ENCODE measurements at regions of chr16 and their contacts with region 1.

Region 1: DNA sequence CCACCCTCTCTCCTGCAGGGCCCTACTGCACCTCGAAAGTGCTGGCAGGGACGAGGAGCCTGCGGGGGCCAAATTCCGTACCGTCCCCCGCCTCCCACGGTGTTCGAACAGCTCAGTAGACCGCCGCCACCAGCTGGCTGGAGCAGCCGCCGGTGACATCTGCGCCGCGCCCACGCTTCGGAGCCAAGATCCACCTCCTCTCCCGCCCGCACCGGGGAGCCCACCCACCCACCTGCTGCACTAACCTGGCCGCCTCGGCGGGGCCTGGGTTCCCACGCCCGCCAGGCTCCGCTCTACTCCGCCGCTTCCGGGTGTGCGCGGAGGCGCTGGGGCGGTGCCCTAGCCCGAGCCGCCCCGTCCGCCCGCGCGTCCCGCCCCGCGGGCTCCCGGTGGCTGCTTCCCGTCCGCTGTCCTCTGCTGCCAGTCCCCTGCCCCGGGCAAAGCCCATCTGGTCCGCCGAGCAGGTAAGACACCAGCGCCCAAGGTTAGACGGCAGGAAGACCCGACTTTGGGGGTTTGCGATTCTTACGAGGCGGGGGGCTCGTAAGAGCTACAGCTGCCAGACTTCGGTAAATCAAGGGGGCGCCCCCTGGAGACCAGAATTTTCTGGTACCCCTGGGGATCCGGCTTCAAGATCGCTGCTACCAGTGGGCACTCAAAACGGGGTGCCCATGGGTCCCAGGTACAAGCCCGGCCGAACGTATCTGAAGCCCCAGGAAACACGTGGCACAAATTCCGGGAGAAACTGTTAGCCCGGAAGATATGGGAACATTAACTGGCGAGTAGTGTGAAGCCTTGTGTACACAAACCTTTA is at the starts of genes FBXL8 and TRADD:
- DNase-seq: peak; percentile 89
- H3K4me3 ChIP-seq: peak within 1 kb of the TSS; percentile 93 to 96
- H3K27ac ChIP-seq: peak within 1 kb of the TSS; percentile 56 to 60
- H3K4me1 ChIP-seq: peaks cover 4 to 30% of the 10 kb centered on the region in 2 experiments; a peak in 1 of 4 replicates
- H3K27me3 ChIP-seq: no peaks in the 10 kb centered on the region
- CTCF ChIP-seq: peak; percentile 74
- EP300 ChIP-seq: no peak; a peak in 1 of 4 replicates
- RAD21 ChIP-seq: no peak
- polyA plus RNA-seq, gene FBXL8: 17.8 and 21.8 TPM in 2 replicates
- polyA plus RNA-seq, gene TRADD: 27.7 and 28.5 TPM in 2 replicates

Region 2: GRCh38 chr16:66858740-66859396 is 300.9 kb before region 1 on chr16:
- CTCF ChIA-PET with region 1: no interaction called
- POLR2A ChIA-PET with region 1: no interaction called
- DNase-seq: peak; percentile 19
- H3K4me3 ChIP-seq: no peak overlapping the region
- H3K27ac ChIP-seq: no peak overlapping the region; a peak in 1 of 4 replicates
- H3K4me1 ChIP-seq: peaks cover 7 to 12% of the 10 kb centered on the region in 2 experiments; a peak in 2 of 4 replicates
- H3K27me3 ChIP-seq: no peaks in the 10 kb centered on the region
- CTCF ChIP-seq: no peak
- EP300 ChIP-seq: no peak
- RAD21 ChIP-seq: no peak

Region 3: GRCh38 chr16:66954097-66954659 is 205.6 kb before region 1 on chr16:
- CTCF ChIA-PET with region 1: interaction called, 82 read pairs
- POLR2A ChIA-PET with region 1: no interaction called
- DNase-seq: peak; percentile 83
- H3K4me3 ChIP-seq: peak overlapping the region in 1 of 2 experiments; percentile 23; a peak in 1 of 4 replicates
- H3K27ac ChIP-seq: no peak overlapping the region
- H3K4me1 ChIP-seq: no peaks in the 10 kb centered on the region
- H3K27me3 ChIP-seq: no peaks in the 10 kb centered on the region
- CTCF ChIP-seq: peak; percentile 87
- EP300 ChIP-seq: no peak
- RAD21 ChIP-seq: peak; percentile 91

Region 4: GRCh38 chr16:66977341-66978113 is 182.3 kb before region 1 on chr16:
- CTCF ChIA-PET with region 1: interaction called, 103 read pairs
- POLR2A ChIA-PET with region 1: no interaction called
- DNase-seq: peak; percentile 94
- H3K4me3 ChIP-seq: peak overlapping the region in 1 of 2 experiments; percentile 46; a peak in 1 of 4 replicates
- H3K27ac ChIP-seq: no peak overlapping the region
- H3K4me1 ChIP-seq: no peaks in the 10 kb centered on the region; a peak in 1 of 4 replicates
- H3K27me3 ChIP-seq: no peaks in the 10 kb centered on the region
- CTCF ChIP-seq: peak; percentile 93
- EP300 ChIP-seq: no peak
- RAD21 ChIP-seq: peak; percentile 99

Region 5: GRCh38 chr16:67017810-67018488 is 141.9 kb before region 1 on chr16:
- CTCF ChIA-PET with region 1: interaction called, 470 read pairs
- POLR2A ChIA-PET with region 1: interaction called, 5 read pairs
- DNase-seq: peak; percentile 89
- H3K4me3 ChIP-seq: no peak overlapping the region
- H3K27ac ChIP-seq: peak overlapping the region in 1 of 2 experiments; percentile 11; a peak in 1 of 4 replicates
- H3K4me1 ChIP-seq: peaks cover 11 to 14% of the 10 kb centered on the region in 2 experiments; a peak in 2 of 4 replicates
- H3K27me3 ChIP-seq: no peaks in the 10 kb centered on the region
- CTCF ChIP-seq: peak; percentile 89
- EP300 ChIP-seq: no peak
- RAD21 ChIP-seq: peak; percentile 98

Region 6: DNA sequence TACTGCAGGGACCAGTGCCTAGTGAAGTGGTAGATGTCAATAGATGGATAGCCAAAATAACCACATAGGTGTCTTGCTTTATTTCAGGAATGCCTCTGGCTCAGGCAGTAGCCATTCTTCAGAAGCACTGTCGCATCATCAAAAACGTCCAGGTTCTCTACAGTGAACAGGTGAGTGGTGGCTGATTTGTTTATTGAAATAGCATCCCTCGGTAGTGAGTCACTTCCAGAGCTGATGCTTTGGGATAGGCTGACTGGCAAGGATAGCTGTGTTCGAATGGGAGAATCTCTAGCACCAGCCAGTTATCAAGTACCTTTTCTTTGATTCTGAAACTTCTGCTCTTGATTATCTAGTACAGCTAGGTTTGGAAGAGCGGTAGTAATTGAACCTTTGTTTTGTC is 39.8 kb before region 1 on chr16:
- CTCF ChIA-PET with region 1: interaction called, 10 read pairs
- POLR2A ChIA-PET with region 1: no interaction called
- DNase-seq: no peak
- H3K4me3 ChIP-seq: no peak overlapping the region
- H3K27ac ChIP-seq: no peak overlapping the region
- H3K4me1 ChIP-seq: peaks cover 0 to 4% of the 10 kb centered on the region in 2 experiments; a peak in 1 of 4 replicates
- H3K27me3 ChIP-seq: no peaks in the 10 kb centered on the region
- CTCF ChIP-seq: no peak
- EP300 ChIP-seq: no peak
- RAD21 ChIP-seq: no peak

Region 7: GRCh38 chr16:67173808-67174705 is 14.3 kb after region 1 on chr16:
- CTCF ChIA-PET with region 1: interaction called, 32 read pairs
- POLR2A ChIA-PET with region 1: interaction called, 37 read pairs
- DNase-seq: peak; percentile 90
- H3K4me3 ChIP-seq: peak overlapping the region; percentile 45 to 60
- H3K27ac ChIP-seq: peak overlapping the region; percentile 67 to 86
- H3K4me1 ChIP-seq: peaks cover 39 to 60% of the 10 kb centered on the region in 2 experiments; a peak in 3 of 4 replicates
- H3K27me3 ChIP-seq: no peaks in the 10 kb centered on the region
- CTCF ChIP-seq: no peak; the same call in 1 of the 2 replicates
- EP300 ChIP-seq: no peak
- RAD21 ChIP-seq: peak; percentile 16; the same call in 1 of the 2 replicates

Region 8: DNA sequence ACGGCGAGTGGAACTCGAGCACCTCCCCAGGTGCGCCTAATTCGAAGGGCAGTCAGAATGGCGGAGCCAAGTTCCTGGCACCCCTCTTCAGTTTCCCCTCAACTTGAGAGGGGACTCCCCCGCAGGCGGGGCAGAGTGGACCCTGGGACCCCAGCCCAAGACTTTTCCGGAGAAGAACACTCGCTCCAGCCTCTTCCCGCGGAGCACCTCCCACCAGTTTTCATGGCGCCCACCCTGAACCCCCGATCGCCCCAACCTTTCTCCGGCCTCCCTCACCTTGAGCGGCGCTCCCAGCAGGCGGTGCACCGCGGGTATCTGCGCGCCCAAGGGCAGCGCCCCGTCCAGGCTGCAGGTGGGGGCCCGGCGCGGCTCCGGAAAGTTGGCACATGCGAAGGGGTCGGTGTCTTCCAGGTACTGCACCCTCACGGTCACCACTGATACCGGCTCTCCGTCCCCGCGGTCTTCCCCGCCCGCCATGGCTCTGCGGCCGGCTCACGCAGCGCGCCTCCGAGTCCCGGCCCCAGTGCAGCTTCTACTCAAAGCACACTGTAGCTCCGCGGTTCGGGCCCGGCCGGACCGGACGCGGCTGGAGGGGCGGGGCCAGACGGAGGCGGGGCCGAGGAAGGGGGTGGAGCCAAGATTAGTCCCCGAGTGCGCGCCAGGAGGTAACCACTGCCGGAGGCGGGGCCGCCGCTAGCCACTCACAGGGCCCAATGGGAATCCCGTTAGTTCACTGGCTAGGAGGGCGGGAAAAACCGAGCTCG is 87.3 kb after region 1 on chr16 and contains the start of gene FHOD1:
- CTCF ChIA-PET with region 1: interaction called, 12 read pairs
- POLR2A ChIA-PET with region 1: no interaction called
- DNase-seq: peak; percentile 93
- H3K4me3 ChIP-seq: peak within 1 kb of the TSS; percentile 92 to 95
- H3K27ac ChIP-seq: peak within 1 kb of the TSS; percentile 96
- H3K4me1 ChIP-seq: peaks cover 42 to 46% of the 10 kb centered on the region in 2 experiments
- H3K27me3 ChIP-seq: no peaks in the 10 kb centered on the region
- CTCF ChIP-seq: no peak
- EP300 ChIP-seq: no peak
- RAD21 ChIP-seq: no peak
- polyA plus RNA-seq, gene FHOD1: 53.2 and 70.9 TPM in 2 replicates

Region 9: GRCh38 chr16:67270931-67271338 is 111.1 kb after region 1 on chr16:
- CTCF ChIA-PET with region 1: no interaction called
- POLR2A ChIA-PET with region 1: no interaction called
- DNase-seq: no peak
- H3K4me3 ChIP-seq: no peak overlapping the region
- H3K27ac ChIP-seq: no peak overlapping the region
- H3K4me1 ChIP-seq: peaks cover 0 to 7% of the 10 kb centered on the region in 2 experiments; a peak in 1 of 4 replicates
- H3K27me3 ChIP-seq: no peaks in the 10 kb centered on the region
- CTCF ChIP-seq: no peak
- EP300 ChIP-seq: no peak
- RAD21 ChIP-seq: no peak

Region 10: DNA sequence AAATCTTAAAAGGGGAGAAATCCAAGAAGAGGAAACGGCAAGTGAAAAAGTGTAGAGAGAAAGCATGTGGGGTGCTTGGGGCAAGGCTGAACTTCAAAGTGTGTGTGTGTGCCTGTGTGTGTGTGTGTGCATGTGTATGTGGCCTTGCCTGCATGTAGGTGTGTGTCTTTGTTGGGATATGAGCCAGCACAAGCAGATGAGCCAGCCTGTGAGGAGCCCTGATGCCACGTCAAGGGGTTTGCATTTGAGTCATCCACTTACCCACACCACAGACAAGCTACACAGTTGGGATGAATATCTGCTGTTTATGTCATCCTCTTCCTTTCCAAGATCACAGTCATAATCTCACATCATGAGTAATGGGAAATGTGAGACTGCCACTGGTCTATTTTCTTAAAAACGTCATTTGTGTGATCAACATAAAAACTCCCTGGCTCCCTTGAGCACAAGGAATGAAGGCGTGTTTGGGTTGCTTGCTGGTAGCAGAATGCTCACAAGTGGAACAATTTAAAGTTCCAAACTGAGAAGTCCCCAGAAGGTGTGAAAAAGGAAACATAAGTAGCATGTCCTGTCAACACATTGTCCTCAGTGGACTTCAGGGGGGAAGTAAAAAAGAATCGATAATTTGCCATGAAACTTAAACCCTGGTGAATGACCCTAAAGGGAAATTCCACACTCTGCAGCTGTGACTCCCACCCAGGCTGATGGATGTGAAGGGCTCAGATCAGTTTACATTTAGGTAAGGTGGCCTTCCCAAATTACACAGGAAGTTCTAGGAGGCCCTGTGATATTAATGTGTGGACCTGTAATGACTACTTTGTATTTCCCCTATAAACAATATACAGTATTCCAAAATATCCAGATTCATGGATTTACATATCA is 152.0 kb after region 1 on chr16:
- CTCF ChIA-PET with region 1: no interaction called
- POLR2A ChIA-PET with region 1: no interaction called
- DNase-seq: peak; percentile 21
- H3K4me3 ChIP-seq: no peak overlapping the region
- H3K27ac ChIP-seq: peak overlapping the region in 1 of 2 experiments; percentile 93; a peak in 2 of 4 replicates
- H3K4me1 ChIP-seq: peaks cover 0 to 13% of the 10 kb centered on the region in 2 experiments; a peak in 1 of 4 replicates
- H3K27me3 ChIP-seq: no peaks in the 10 kb centered on the region
- CTCF ChIP-seq: no peak
- EP300 ChIP-seq: peak in 1 of 2 experiments; percentile 62; a peak in 1 of 4 replicates
- RAD21 ChIP-seq: no peak

Region 11: GRCh38 chr16:67445913-67446907 is 286.4 kb after region 1 on chr16:
- CTCF ChIA-PET with region 1: no interaction called
- POLR2A ChIA-PET with region 1: no interaction called
- DNase-seq: peak; percentile 43
- H3K4me3 ChIP-seq: no peak overlapping the region
- H3K27ac ChIP-seq: no peak overlapping the region; a peak in 1 of 4 replicates
- H3K4me1 ChIP-seq: peaks cover 0 to 44% of the 10 kb centered on the region in 2 experiments; a peak in 1 of 4 replicates
- H3K27me3 ChIP-seq: no peaks in the 10 kb centered on the region
- CTCF ChIP-seq: no peak
- EP300 ChIP-seq: no peak
- RAD21 ChIP-seq: no peak

Measured in SK-N-SH (cell line).